ENCODE measurements at regions of chr2 and their contacts with region 1.

Region 1: GRCh38 chr2:73085691-73086360 is 14.3 kb upstream of the SFXN5 start:
- DNase-seq: peak; percentile 44 to 91
- H3K4me3 ChIP-seq: peak overlapping the region in 1 of 2 donors; percentile 60
- H3K27ac ChIP-seq: no peak overlapping the region
- H3K4me1 ChIP-seq: peaks cover 19 to 58% of the 10 kb centered on the region in 2 donors
- H3K27me3 ChIP-seq: no peaks in the 10 kb centered on the region
- CTCF ChIP-seq: peak; percentile 85 to 97 (median 92)

Region 2: GRCh38 chr2:73112913-73113633 is 27.2 kb after region 1 on chr2 and contains the start of gene RAB11FIP5:
- intact Hi-C with region 1: loop called (anchors 1 kb)
- DNase-seq: peak in 1 of 2 donors; percentile 90
- H3K4me3 ChIP-seq: peak within 1 kb of the TSS; percentile 78 to 84
- H3K27ac ChIP-seq: peak within 1 kb of the TSS; percentile 92 to 98
- H3K4me1 ChIP-seq: peaks cover 0 to 18% of the 10 kb centered on the region in 2 donors
- H3K27me3 ChIP-seq: no peaks in the 10 kb centered on the region
- CTCF ChIP-seq: peak in 1 of 3 experiments; percentile 12
- total RNA-seq, gene RAB11FIP5: 95.3 TPM

Region 3: GRCh38 chr2:73156539-73157124 is 70.8 kb after region 1 on chr2:
- intact Hi-C with region 1: loop called (anchors 1 kb)
- DNase-seq: peak in 1 of 2 donors; percentile 79
- H3K4me3 ChIP-seq: peak overlapping the region in 1 of 2 donors; percentile 5
- H3K27ac ChIP-seq: no peak overlapping the region
- H3K4me1 ChIP-seq: peaks cover 0 to 6% of the 10 kb centered on the region in 2 donors
- H3K27me3 ChIP-seq: no peaks in the 10 kb centered on the region
- CTCF ChIP-seq: peak; percentile 78 to 91 (median 80)